ENCODE measurements at regions of chr19 and their contacts with region 1.

Region 1: DNA sequence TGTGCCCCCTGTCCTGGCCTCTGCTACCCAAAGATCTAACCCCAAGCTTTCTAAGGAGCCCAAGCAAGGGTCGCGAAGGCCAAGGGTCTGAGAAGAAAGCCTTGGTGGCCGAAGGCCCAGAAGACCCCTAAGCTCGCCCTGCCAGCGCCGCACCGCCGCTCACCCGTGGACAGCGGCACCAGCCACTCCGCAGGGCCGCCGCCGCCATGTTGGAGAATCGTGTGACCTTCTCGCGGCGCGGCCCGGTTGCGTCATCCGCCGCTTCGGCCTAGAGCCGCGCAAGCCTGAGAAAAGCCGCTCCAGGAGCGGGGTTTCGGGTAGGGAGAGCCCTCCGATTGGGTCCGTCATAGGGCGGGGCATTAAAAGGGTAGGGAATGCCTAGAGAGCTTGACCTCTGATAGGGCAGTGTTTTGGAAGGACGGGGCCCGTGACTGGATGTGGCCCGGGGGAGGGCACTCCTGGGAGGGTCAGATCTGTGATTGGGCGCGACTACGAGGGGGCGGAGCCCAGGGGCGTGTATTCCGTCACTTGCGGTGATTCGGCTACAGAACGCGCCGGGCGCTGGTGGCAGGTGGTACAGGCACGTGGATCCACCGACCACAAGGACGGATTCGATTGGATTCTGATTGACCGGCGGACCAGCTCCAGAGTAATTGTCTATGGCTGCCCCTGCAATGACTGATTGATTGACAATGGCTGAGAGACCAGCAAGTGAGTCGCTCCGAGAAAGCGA is at the start of gene TIMM44:
- DNase-seq: peak; percentile 99
- H3K4me3 Mint-ChIP-seq: peak within 1 kb of the TSS; percentile 92
- H3K27ac Mint-ChIP-seq: peak within 1 kb of the TSS; percentile 98
- H3K4me1 Mint-ChIP-seq: peaks cover 38% of the 10 kb centered on the region
- H3K27me3 Mint-ChIP-seq: no peaks in the 10 kb centered on the region
- total RNA-seq, gene TIMM44: 66.5 to 68.5 TPM

Region 2: GRCh38 chr19:7868676-7869452 is 74.7 kb before region 1 on chr19:
- CTCF ChIA-PET with region 1: interaction called, 11 read pairs
- POLR2A ChIA-PET with region 1: no interaction called
- intact Hi-C with region 1: no loop called
- DNase-seq: peak; percentile 86
- H3K4me3 Mint-ChIP-seq: peak overlapping the region; percentile 73
- H3K27ac Mint-ChIP-seq: no peak overlapping the region
- H3K4me1 Mint-ChIP-seq: peaks cover 42% of the 10 kb centered on the region
- H3K27me3 Mint-ChIP-seq: peaks cover 29% of the 10 kb centered on the region

Region 3: GRCh38 chr19:7928736-7929701 is 14.6 kb before region 1 on chr19:
- CTCF ChIA-PET with region 1: interaction called, 34 read pairs
- POLR2A ChIA-PET with region 1: interaction called, 10 read pairs
- intact Hi-C with region 1: no loop called
- DNase-seq: peak; percentile 74
- H3K4me3 Mint-ChIP-seq: no peak overlapping the region
- H3K27ac Mint-ChIP-seq: peak overlapping the region; percentile 61
- H3K4me1 Mint-ChIP-seq: peaks cover 19% of the 10 kb centered on the region
- H3K27me3 Mint-ChIP-seq: no peaks in the 10 kb centered on the region

Region 4: DNA sequence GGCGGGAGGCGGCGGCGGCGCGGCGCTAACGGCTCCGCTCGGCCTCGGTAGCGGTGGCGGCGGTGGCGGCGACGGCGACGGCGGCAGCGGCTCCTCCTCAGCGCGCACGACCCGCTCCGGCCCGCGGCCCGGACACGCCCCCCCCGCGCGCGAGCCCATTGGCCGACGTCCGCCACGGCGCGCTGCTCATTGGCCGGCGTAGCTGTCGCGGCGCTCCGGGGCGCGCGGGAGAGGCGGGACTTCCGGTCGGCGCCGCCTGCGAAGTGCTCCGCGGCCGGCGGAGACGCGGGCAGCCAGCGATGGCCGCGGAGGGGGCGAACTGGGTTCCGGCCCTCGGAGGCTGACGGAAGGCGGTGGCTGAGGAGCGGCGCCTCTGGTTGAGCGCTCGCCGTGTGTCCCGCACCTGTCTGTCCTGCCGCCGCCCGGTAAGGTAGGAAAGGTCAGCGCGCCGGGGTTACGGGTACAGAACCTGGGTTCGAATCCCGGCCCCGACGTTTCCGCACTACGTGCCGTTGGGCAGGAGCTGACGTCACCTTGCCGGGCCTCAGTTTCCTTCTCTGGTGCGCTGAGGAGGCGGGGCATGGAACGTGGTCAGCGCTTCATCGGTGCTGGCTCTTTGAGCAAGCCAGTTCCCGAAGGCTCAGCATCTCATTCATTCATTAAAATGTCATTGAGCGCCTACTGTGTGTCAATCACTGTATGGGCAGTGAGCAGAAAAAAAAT is 62.1 kb after region 1 on chr19 and contains the start of gene ELAVL1:
- CTCF ChIA-PET with region 1: interaction called, 46 read pairs
- POLR2A ChIA-PET with region 1: interaction called, 9 read pairs
- intact Hi-C with region 1: loop called (anchors 1 kb)
- DNase-seq: peak; percentile 92
- H3K4me3 Mint-ChIP-seq: peak within 1 kb of the TSS; percentile 93
- H3K27ac Mint-ChIP-seq: peak within 1 kb of the TSS; percentile 72
- H3K4me1 Mint-ChIP-seq: peaks cover 32% of the 10 kb centered on the region
- H3K27me3 Mint-ChIP-seq: no peaks in the 10 kb centered on the region
- total RNA-seq, gene ELAVL1: 143 to 145 TPM

Region 5: DNA sequence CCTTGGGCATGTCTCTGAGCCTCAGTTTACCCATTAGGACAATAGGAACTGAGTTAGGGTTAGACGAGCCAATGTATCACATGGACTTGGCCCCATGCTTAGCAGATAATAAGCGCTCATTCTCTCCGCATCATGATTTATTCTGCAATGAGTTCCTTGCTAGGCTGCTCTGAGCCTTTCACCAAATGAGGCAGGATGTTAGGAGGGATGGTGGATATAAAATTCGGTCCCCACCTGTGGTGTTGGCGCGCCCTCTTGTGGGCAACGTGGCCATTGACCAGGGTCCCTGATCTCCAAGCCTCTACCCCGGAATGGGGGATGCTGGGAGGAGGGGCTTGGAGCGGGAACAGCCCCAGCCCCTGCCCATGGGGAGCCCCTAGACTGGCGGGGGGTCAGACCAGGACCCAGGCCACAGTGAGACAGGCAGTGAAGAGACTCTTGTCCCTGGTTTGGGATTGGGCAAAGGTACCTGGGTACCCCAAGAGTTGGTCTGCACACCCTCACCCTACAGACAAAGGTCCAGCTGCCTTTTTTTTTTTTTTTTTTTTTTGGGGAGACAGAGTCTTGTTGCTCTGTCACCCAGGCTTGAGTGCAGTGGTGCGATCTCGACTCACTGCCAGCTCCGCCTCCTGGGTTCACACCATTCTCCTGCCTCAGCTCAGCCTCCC is 309.4 kb after region 1 on chr19:
- CTCF ChIA-PET with region 1: interaction called, 10 read pairs
- POLR2A ChIA-PET with region 1: no interaction called
- intact Hi-C with region 1: loop called (anchors 1 kb)
- DNase-seq: peak; percentile 89
- H3K4me3 Mint-ChIP-seq: no peak overlapping the region
- H3K27ac Mint-ChIP-seq: no peak overlapping the region
- H3K4me1 Mint-ChIP-seq: no peaks in the 10 kb centered on the region
- H3K27me3 Mint-ChIP-seq: no peaks in the 10 kb centered on the region

Measured in activated CD4-positive, alpha-beta memory T cell treated with anti-CD3 and anti-CD28 coated beads for 36 hours (primary cell).